Activated CD4-positive, alpha-beta T cell treated with anti-CD3 and anti-CD28 coated beads for 36 hours (primary cell): ENCODE measurements at regions of chr7 and their contacts with region 1.

Region 1: GRCh38 chr7:76314042-76314721 is 11.7 kb downstream of the HSPB1 start:
- DNase-seq: peak; percentile 99
- ATAC-seq: peak; percentile 57
- H3K4me3 Mint-ChIP-seq: peak overlapping the region; percentile 25
- H3K27ac Mint-ChIP-seq: peak overlapping the region; percentile 82
- H3K4me1 Mint-ChIP-seq: peaks cover 18% of the 10 kb centered on the region
- H3K27me3 Mint-ChIP-seq: no peaks in the 10 kb centered on the region

Region 2: GRCh38 chr7:75878769-75879611 is 435.2 kb before region 1 on chr7 and contains the start of gene RHBDD2:
- CTCF ChIA-PET with region 1: no interaction called
- POLR2A ChIA-PET with region 1: no interaction called
- intact Hi-C with region 1: loop called in 1 of 2 experiments (anchors 5 kb)
- DNase-seq: peak; percentile 99
- ATAC-seq: peak; percentile 97
- H3K4me3 Mint-ChIP-seq: peak within 1 kb of the TSS; percentile 100
- H3K27ac Mint-ChIP-seq: peak within 1 kb of the TSS; percentile 97
- H3K4me1 Mint-ChIP-seq: peaks cover 34% of the 10 kb centered on the region
- H3K27me3 Mint-ChIP-seq: no peaks in the 10 kb centered on the region
- total RNA-seq, gene RHBDD2: 21.6 to 23.2 TPM

Region 3: GRCh38 chr7:76011442-76011861 is 302.7 kb before region 1 on chr7:
- CTCF ChIA-PET with region 1: no interaction called
- POLR2A ChIA-PET with region 1: no interaction called
- intact Hi-C with region 1: loop called in 1 of 2 experiments (anchors 1 kb)
- DNase-seq: no peak
- ATAC-seq: no peak
- H3K4me3 Mint-ChIP-seq: no peak overlapping the region
- H3K27ac Mint-ChIP-seq: no peak overlapping the region
- H3K4me1 Mint-ChIP-seq: peaks cover 34% of the 10 kb centered on the region
- H3K27me3 Mint-ChIP-seq: peaks cover 3% of the 10 kb centered on the region

Region 4: GRCh38 chr7:76179686-76180085 is 134.5 kb before region 1 on chr7:
- CTCF ChIA-PET with region 1: interaction called, 69 read pairs
- POLR2A ChIA-PET with region 1: interaction called, 3 read pairs
- intact Hi-C with region 1: loop called (anchors 1 kb)
- DNase-seq: no peak
- ATAC-seq: no peak
- H3K4me3 Mint-ChIP-seq: no peak overlapping the region
- H3K27ac Mint-ChIP-seq: no peak overlapping the region
- H3K4me1 Mint-ChIP-seq: no peaks in the 10 kb centered on the region
- H3K27me3 Mint-ChIP-seq: no peaks in the 10 kb centered on the region

Region 5: DNA sequence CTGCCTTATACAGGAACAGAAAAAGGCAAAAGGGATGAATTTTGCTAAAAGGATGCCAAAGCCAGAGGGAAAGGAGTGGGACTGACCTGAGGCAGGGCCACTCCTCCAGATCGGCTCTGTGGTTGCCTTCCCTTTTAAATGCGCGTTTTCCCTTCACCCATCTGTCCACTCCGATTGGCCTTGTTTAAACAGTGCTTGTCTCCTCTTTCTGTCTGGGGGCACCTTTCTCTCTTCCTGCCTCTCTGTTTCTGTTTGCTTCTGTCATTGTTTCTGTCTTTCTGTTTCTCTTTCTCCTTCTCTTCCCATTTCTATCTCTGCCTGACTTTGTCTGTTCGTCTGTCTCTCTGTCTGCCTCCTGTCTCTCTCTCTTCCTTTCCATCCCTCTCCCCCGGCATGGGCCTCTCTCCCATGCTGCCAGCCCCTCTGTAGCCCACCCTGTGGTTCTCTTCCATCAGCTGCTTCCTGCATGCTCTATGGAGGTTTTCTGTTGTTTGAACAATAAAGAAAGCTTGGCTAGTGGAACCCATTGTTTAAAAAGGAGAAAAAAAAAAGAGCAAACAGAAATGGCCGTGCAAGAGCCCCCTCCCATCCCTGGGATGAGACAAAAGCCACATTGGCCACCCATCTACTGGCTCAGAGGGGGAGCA is 41.2 kb before region 1 on chr7:
- CTCF ChIA-PET with region 1: interaction called, 11 read pairs
- POLR2A ChIA-PET with region 1: interaction called, 5 read pairs
- intact Hi-C with region 1: loop called in 1 of 2 experiments (anchors 5 kb)
- DNase-seq: no peak
- ATAC-seq: peak; percentile 60
- H3K4me3 Mint-ChIP-seq: peak overlapping the region; percentile 4
- H3K27ac Mint-ChIP-seq: peak overlapping the region; percentile 22
- H3K4me1 Mint-ChIP-seq: peaks cover 19% of the 10 kb centered on the region
- H3K27me3 Mint-ChIP-seq: peaks cover 16% of the 10 kb centered on the region

Region 6: DNA sequence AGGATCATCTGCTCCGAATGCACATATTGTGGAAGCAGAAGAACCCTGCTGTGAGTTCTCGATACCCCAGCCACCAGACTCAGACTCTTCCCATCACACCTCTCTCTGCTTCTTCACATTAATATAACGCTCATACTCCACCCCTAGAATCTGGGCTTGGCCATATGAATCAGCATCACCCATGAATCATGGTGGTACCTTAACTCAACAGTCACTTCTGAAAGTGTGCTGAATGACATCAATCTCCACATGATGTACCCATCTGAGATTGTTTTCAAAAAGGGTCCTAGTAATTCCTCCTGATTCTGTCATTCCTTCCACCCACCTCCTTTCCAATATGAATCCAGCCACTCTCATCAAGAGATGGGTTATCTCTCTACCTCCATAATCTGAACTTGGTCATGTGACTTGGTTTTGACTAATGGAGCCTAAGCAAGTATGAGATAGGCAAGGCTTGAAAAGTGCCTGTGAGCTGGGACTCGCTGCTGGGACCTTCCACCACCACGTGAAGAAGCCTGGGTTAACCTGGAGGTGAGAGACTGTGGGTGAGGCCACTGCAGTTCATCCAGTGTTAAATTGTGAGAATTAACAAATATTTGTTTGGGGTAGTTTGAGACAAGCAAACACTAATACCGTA is 29.2 kb after region 1 on chr7:
- CTCF ChIA-PET with region 1: interaction called, 6 read pairs
- POLR2A ChIA-PET with region 1: no interaction called
- intact Hi-C with region 1: loop called in 1 of 2 experiments (anchors 1 kb)
- DNase-seq: peak; percentile 46
- ATAC-seq: peak; percentile 96
- H3K4me3 Mint-ChIP-seq: no peak overlapping the region
- H3K27ac Mint-ChIP-seq: peak overlapping the region; percentile 34
- H3K4me1 Mint-ChIP-seq: peaks cover 74% of the 10 kb centered on the region
- H3K27me3 Mint-ChIP-seq: no peaks in the 10 kb centered on the region